Right ventricle myocardium inferior (tissue), 1 donor: ENCODE measurements at regions of chr12 and their contacts with region 1.

Region 1: GRCh38 chr12:70660620-70661219 is 23.5 kb upstream of the PTPRB start:
- DNase-seq: peak; percentile 58
- ATAC-seq: peak; percentile 48

Region 2: GRCh38 chr12:70609711-70610491 is 50.8 kb before region 1 on chr12:
- intact Hi-C with region 1: loop called (anchors 5 kb)
- DNase-seq: peak; percentile 71
- ATAC-seq: peak; percentile 72

Region 3: GRCh38 chr12:70692681-70693288 is 32.1 kb after region 1 on chr12:
- intact Hi-C with region 1: loop called (anchors 5 kb)
- DNase-seq: no peak
- ATAC-seq: no peak

Region 4: DNA sequence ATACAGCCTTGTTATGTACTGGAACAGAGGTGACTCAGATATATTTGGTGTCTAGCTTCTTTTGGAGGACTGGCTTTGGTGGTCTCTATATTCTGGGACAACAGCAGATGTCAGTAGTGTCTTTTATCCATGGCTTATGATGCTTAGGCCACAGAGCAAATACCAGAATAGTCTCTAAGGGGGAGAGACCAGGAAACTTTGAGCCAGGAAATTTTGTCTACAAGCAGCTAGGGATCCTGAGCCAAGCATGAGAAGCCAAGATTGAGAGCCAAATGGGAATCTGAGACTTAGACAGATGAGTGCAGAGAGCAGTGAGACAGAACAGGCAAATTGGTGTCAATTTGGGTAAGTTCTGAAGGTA is 288.2 kb after region 1 on chr12:
- intact Hi-C with region 1: no loop called
- DNase-seq: no peak
- ATAC-seq: peak; percentile 97